ENCODE measurements at regions of chr4 and their contacts with region 1.

Region 1: DNA sequence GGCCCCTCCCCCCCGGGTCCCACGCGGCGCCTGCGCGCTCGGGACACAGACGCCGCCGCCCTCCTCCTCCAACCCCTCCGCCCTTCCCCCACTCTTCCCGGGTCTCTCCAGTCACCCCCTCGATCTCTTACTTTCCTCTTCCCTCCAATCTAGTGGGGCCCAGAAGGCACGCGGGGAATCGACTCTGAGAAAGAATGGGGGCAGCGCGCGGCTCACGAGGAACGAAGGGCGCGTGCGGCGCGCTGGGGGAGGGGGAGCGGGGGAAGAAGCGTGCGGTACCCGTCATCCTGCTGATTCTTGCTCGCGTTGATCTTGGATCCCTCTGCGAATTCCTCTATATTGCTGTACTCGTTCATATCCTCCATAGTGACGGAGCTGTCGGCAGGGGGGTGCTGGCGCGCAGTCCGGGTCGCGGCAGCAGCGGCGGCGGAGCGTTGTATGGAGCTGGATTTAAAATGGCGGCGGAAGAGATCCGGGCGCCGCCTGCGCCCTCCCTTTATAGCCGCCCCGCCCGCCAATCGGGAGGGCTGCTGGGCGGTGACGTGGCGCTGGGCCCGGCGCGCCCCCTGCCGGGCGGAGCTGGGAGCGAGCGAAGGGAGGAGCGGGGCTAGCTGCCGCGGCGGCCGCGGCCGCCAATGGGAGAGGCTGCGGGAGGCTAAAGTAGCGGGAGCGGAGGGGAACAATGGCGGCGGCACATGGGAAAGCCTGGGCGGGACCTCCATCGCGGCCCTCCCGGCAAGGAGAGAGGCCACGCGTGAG is 1.1 kb downstream of the HNRNPDL start:
- DNase-seq: peak; percentile 76 to 96
- H3K4me3 ChIP-seq: peak overlapping the region; percentile 94 to 97 (median 94)
- H3K27ac ChIP-seq: peak overlapping the region; percentile 99
- H3K4me1 ChIP-seq: peaks cover 0 to 4% (median 2%) of the 10 kb centered on the region in 4 experiments; a peak in 3 of 7 replicates
- H3K27me3 ChIP-seq: no peaks in the 10 kb centered on the region
- CTCF ChIP-seq: peak; percentile 59 to 75 (median 75)
- EP300 ChIP-seq: no peak
- POLR2A ChIP-seq: peak; percentile 81 to 88; a peak in 2 of 3 replicates
- RAD21 ChIP-seq: 0 out of 4 replicates have a peak, but pooled peaks of 1 of the 2 experiments have one; percentile 24

Region 2: GRCh38 chr4:82360298-82361177 is 68.6 kb before region 1 on chr4:
- CTCF ChIA-PET with region 1: interaction called, 4 read pairs
- POLR2A ChIA-PET with region 1: interaction called, 104 read pairs
- DNase-seq: no peak
- H3K4me3 ChIP-seq: no peak overlapping the region
- H3K27ac ChIP-seq: no peak overlapping the region; the same call in 1 of the 2 replicates
- H3K4me1 ChIP-seq: no peaks in the 10 kb centered on the region; a peak in 1 of 7 replicates
- H3K27me3 ChIP-seq: peaks cover 0 to 1% (median 0%) of the 10 kb centered on the region in 4 experiments; a peak in 1 of 7 replicates
- CTCF ChIP-seq: peak in 1 of 3 experiments; percentile 56; a peak in 2 of 4 replicates
- EP300 ChIP-seq: no peak
- POLR2A ChIP-seq: no peak
- RAD21 ChIP-seq: peak; percentile 45 to 56

Region 3: GRCh38 chr4:82388405-82388804 is 40.7 kb before region 1 on chr4:
- CTCF ChIA-PET with region 1: no interaction called
- POLR2A ChIA-PET with region 1: interaction called, 24 read pairs
- DNase-seq: no peak
- H3K4me3 ChIP-seq: no peak overlapping the region
- H3K27ac ChIP-seq: no peak overlapping the region
- H3K4me1 ChIP-seq: no peaks in the 10 kb centered on the region
- H3K27me3 ChIP-seq: no peaks in the 10 kb centered on the region
- CTCF ChIP-seq: peak in 2 of 3 experiments; percentile 2 to 14; a peak in 2 of 4 replicates
- EP300 ChIP-seq: no peak
- POLR2A ChIP-seq: no peak
- RAD21 ChIP-seq: peak; percentile 11 to 30; a peak in 2 of 4 replicates

Region 4: DNA sequence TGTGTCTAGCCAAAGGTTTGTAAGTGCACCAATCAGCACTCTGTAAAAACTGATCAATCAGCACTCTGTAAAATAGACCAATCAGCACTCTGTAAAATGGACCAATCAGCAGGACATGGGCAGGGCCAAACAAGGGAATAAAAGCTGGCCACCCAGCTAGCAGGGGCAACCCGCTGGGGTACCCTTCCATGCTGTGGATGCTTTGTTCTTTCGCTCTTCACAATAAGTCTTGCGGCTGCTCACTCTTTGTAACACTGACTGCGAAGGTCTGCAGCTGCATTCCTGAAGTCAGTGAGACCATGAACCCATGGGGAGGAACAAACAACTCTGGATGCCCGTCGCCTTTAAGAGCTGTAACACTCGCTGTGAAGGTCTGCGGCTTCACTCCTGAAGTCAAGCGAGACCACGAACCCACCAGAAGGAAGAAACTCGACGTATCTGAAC is 13.2 kb before region 1 on chr4:
- CTCF ChIA-PET with region 1: interaction called, 6 read pairs
- POLR2A ChIA-PET with region 1: interaction called, 76 read pairs
- DNase-seq: no peak
- H3K4me3 ChIP-seq: no peak overlapping the region; a peak in 1 of 8 replicates
- H3K27ac ChIP-seq: no peak overlapping the region
- H3K4me1 ChIP-seq: no peaks in the 10 kb centered on the region
- H3K27me3 ChIP-seq: no peaks in the 10 kb centered on the region
- CTCF ChIP-seq: no peak
- EP300 ChIP-seq: no peak
- POLR2A ChIP-seq: peak in 1 of 2 experiments; percentile 52; a peak in 1 of 3 replicates
- RAD21 ChIP-seq: no peak

Region 5: DNA sequence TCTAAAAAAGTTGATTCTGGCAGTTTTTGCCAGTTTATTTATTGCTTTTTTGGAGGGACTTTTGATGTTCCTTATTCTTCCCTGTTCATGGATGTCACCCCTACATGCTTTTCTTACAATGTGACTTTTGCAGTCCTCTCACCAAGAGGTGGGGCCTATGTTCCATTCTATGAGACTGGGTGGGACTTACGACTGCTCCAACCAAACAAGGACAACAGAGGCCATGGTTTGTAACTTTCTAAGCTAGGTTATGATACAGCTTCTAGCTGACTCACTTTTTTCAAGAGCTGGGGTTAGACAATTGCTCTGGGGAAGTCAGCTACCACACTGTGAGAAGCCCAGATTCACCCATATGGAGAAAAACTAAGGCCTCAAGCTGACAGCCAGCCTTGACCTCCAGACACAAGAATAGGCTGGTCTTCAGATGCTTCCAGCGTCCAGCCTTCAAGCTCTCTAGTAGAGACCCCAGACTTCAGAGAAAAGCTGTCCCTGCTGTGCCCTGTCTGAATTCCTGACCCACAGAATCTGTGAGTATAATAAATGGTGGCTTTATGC is 40.7 kb after region 1 on chr4:
- CTCF ChIA-PET with region 1: no interaction called
- POLR2A ChIA-PET with region 1: interaction called, 24 read pairs
- DNase-seq: no peak
- H3K4me3 ChIP-seq: no peak overlapping the region
- H3K27ac ChIP-seq: no peak overlapping the region
- H3K4me1 ChIP-seq: 0 out of 7 replicates have a peak, but pooled peaks cover 0 to 2% (median 0%) of the 10 kb centered on the region in 4 experiments
- H3K27me3 ChIP-seq: no peaks in the 10 kb centered on the region
- CTCF ChIP-seq: no peak
- EP300 ChIP-seq: no peak
- POLR2A ChIP-seq: peak in 1 of 2 experiments; percentile 20; a peak in 1 of 3 replicates
- RAD21 ChIP-seq: peak; percentile 36 to 45

Region 6: GRCh38 chr4:82528868-82529267 is 99.7 kb after region 1 on chr4:
- CTCF ChIA-PET with region 1: no interaction called
- POLR2A ChIA-PET with region 1: no interaction called
- DNase-seq: no peak
- H3K4me3 ChIP-seq: no peak overlapping the region
- H3K27ac ChIP-seq: no peak overlapping the region
- H3K4me1 ChIP-seq: peaks cover 0 to 10% (median 3%) of the 10 kb centered on the region in 4 experiments; a peak in 3 of 7 replicates
- H3K27me3 ChIP-seq: no peaks in the 10 kb centered on the region
- CTCF ChIP-seq: peak; percentile 10 to 30 (median 17); a peak in 3 of 4 replicates
- EP300 ChIP-seq: no peak
- POLR2A ChIP-seq: no peak
- RAD21 ChIP-seq: peak; percentile 58 to 64